Upper lobe of right lung (tissue), 1 donor: ENCODE measurements at regions of chr22 and their contacts with region 1.

Region 1: DNA sequence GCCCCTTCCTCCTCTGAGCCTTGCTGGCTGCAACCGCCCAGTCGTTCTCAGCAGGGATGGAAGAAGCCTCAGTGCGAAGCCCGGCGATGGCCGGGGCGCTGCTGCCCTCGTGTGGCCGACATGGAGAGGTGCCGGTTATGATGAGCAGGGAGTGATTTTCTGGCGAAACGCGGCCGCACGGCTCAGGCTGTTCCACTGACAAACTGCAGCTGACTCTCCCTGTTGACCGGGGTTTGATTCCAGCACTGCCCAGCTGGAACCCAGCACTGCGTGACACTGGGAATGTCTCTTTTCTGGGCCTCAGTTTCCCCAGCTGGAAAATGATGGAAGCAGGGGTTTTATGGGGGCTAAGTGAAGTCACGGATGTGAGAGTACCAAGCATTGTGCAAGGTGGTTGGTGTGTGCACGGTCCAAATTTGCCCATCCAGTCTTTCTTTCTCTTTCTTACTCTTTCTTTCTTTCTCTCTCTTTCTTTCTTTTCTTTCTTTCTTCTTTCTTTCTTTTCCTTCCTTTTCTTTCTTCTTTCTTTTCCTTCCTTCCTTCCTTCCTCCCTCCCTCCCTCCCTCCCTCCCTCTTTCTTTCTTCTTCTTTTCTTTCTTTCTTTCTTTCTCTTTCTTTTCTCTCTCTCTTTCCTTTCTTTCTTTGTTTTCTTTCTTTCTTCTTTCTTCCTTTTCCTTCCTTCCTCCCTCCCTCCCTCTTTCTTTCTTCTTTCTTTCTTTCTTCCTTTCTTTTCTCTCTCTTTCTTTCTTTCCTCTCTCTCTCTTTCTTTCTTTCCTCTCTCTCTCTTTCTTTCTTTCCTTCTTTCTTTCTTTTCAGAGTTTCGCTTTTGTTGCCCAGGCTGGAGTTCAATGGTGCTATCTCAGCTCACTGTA is 25.8 kb upstream of the MPPED1 start:
- DNase-seq: peak; percentile 89
- ATAC-seq: peak; percentile 96
- H3K4me3 ChIP-seq: no peak overlapping the region
- H3K27ac ChIP-seq: no peak overlapping the region
- H3K4me1 ChIP-seq: peaks cover 8% of the 10 kb centered on the region
- H3K27me3 ChIP-seq: peaks cover 23% of the 10 kb centered on the region
- CTCF ChIP-seq: peak; percentile 89

Region 2: GRCh38 chr22:42959576-42960509 is 426.2 kb before region 1 on chr22:
- intact Hi-C with region 1: no loop called
- DNase-seq: no peak
- ATAC-seq: peak; percentile 77
- H3K4me3 ChIP-seq: peak overlapping the region; percentile 33
- H3K27ac ChIP-seq: peak overlapping the region; percentile 76
- H3K4me1 ChIP-seq: peaks cover 57% of the 10 kb centered on the region
- H3K27me3 ChIP-seq: no peaks in the 10 kb centered on the region
- CTCF ChIP-seq: no peak

Region 3: GRCh38 chr22:43273902-43274484 is 112.0 kb before region 1 on chr22:
- intact Hi-C with region 1: loop called (anchors 10 kb)
- DNase-seq: no peak
- ATAC-seq: peak; percentile 66
- H3K4me3 ChIP-seq: no peak overlapping the region
- H3K27ac ChIP-seq: no peak overlapping the region
- H3K4me1 ChIP-seq: peaks cover 5% of the 10 kb centered on the region
- H3K27me3 ChIP-seq: no peaks in the 10 kb centered on the region
- CTCF ChIP-seq: peak; percentile 75

Region 4: GRCh38 chr22:43293655-43294392 is 92.2 kb before region 1 on chr22:
- intact Hi-C with region 1: no loop called
- DNase-seq: peak; percentile 80
- ATAC-seq: peak; percentile 64
- H3K4me3 ChIP-seq: no peak overlapping the region
- H3K27ac ChIP-seq: peak overlapping the region; percentile 79
- H3K4me1 ChIP-seq: peaks cover 62% of the 10 kb centered on the region
- H3K27me3 ChIP-seq: no peaks in the 10 kb centered on the region
- CTCF ChIP-seq: no peak